HCT116 (cell line): ENCODE measurements at regions of chr4 and their contacts with region 1.

Region 1: DNA sequence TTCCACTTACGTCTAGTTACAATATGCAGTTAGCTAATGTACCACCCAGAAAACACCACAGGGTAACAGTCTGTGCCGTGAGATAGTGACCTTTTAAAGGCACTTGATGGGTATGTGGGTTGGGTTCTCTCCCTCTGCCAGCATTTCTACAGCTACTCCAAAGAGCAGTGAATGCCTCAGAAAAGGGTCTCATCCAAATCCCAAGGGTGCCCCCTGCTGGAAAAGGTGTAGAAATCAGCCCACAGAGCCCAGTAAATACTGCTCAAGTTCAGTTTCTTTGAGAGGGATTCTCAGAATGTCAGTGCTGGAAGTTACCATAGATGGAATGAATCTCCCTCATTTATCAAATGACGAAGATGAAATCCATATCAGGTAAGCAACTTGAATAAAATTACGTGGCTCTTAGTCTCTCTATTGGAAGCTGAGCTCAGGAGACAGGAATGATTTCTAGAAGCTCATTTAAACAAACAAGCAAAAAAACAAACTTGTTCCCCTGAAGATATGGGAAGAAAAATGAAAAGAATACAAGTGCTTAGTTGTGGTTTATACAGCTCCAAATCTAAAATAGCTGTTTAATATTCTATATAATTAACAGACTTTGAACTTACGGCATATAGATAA is 9.5 kb downstream of the RNF175 start:
- DNase-seq: peak; percentile 54
- ATAC-seq: peak; percentile 97
- H3K4me3 ChIP-seq: no peak overlapping the region
- H3K27ac ChIP-seq: no peak overlapping the region
- H3K4me1 ChIP-seq: peaks cover 0 to 7% of the 10 kb centered on the region in 2 experiments; a peak in 1 of 4 replicates
- H3K27me3 ChIP-seq: no peaks in the 10 kb centered on the region
- CTCF ChIP-seq: peak; percentile 77 to 84 (median 77)
- POLR2A ChIP-seq: no peak
- RAD21 ChIP-seq: peak; percentile 89

Region 2: GRCh38 chr4:153344131-153345010 is 405.9 kb before region 1 on chr4 and contains the start of gene MND1:
- CTCF ChIA-PET with region 1: no interaction called
- POLR2A ChIA-PET with region 1: no interaction called
- RAD21 ChIA-PET with region 1: no interaction called
- intact Hi-C with region 1: loop called (anchors 10 kb)
- DNase-seq: peak; percentile 68
- ATAC-seq: peak; percentile 89
- H3K4me3 ChIP-seq: peak within 1 kb of the TSS; percentile 67 to 78
- H3K27ac ChIP-seq: peak within 1 kb of the TSS; percentile 79
- H3K4me1 ChIP-seq: peaks cover 18 to 37% of the 10 kb centered on the region in 2 experiments
- H3K27me3 ChIP-seq: no peaks in the 10 kb centered on the region
- CTCF ChIP-seq: peak; percentile 66 to 84 (median 81)
- POLR2A ChIP-seq: peak; percentile 1
- RAD21 ChIP-seq: peak; percentile 86
- total RNA-seq, gene MND1: 29.9 TPM

Region 3: GRCh38 chr4:153634738-153635353 is 115.5 kb before region 1 on chr4:
- CTCF ChIA-PET with region 1: interaction called, 17 read pairs
- POLR2A ChIA-PET with region 1: no interaction called
- RAD21 ChIA-PET with region 1: interaction called in 1 of 2 experiments, 5 read pairs
- intact Hi-C with region 1: loop called (anchors 1 kb)
- DNase-seq: no peak
- ATAC-seq: peak; percentile 78
- H3K4me3 ChIP-seq: no peak overlapping the region
- H3K27ac ChIP-seq: no peak overlapping the region
- H3K4me1 ChIP-seq: no peaks in the 10 kb centered on the region
- H3K27me3 ChIP-seq: no peaks in the 10 kb centered on the region
- CTCF ChIP-seq: peak; percentile 57 to 73 (median 72); a peak in 5 of 6 replicates
- POLR2A ChIP-seq: no peak
- RAD21 ChIP-seq: peak; percentile 59

Region 4: DNA sequence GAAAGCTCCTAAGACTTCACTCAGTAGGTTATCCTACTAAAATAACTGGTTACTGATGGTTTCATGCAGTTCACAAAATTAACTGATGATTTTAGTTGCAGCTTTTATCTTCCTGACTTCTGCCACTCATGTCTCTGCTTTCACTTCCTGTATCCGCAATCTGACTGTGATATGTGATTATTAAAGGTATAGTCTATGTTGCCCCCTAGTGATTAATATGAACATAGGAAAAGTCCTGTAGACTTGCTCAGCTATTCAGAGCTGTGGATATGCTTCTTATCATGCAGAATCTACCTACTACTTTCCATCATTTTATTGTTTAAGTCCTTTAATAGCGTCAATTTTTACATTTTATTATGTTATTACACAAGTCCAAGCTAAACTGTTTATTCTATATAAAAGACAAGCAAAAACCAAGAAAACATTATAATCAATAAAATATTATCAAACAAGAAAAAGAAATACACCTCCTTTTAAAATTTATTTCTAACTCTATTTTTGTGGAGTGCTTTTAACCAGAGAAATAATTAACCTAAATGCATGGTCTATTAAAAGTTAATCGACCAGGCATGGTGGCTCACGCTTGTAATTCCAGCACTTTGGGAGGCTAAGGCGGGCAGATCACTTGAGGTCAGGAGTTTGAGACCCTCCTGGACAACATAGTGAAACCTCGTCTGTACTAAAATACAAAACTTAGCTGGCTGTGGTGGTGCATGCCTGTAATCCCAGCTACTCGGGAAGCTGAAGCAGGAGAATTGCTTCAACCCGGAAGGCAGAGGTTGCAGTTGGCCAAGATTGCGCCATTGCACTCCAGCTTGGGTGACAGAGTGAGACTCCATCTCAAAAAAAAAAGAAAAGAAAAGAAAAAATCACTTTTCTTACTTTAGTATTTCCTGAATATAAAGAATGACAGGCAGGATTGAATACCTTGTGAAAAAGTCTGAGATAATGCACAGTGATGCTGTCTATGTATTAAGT is 106.6 kb before region 1 on chr4:
- CTCF ChIA-PET with region 1: interaction called, 12 read pairs
- POLR2A ChIA-PET with region 1: no interaction called
- RAD21 ChIA-PET with region 1: no interaction called
- intact Hi-C with region 1: no loop called
- DNase-seq: peak; percentile 46
- ATAC-seq: peak; percentile 90
- H3K4me3 ChIP-seq: no peak overlapping the region
- H3K27ac ChIP-seq: no peak overlapping the region
- H3K4me1 ChIP-seq: 0 out of 4 replicates have a peak, but pooled peaks cover 0 to 5% of the 10 kb centered on the region in 2 experiments
- H3K27me3 ChIP-seq: no peaks in the 10 kb centered on the region
- CTCF ChIP-seq: peak; percentile 32 to 71 (median 63); a peak in 5 of 6 replicates
- POLR2A ChIP-seq: no peak
- RAD21 ChIP-seq: peak; percentile 75

Region 5: DNA sequence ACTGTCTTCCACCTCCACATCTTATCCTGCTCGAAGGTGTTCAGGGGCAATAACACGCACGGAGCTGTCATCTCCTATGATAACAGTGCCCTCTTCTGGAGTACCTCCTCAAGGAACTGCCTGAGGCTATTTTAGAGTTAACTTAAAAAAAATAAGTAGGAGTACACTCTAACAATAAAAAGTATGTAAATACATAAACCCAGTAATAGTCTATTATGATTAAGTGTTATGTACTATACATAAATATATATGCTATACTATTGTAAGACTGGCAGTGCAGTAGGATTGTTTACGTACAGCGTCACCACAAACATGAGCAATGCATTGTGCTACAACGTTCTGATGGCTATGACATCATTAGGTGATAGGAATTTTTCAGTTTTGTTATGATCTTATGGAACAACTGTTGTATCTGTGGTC is 100.7 kb before region 1 on chr4:
- CTCF ChIA-PET with region 1: interaction called, 12 read pairs
- POLR2A ChIA-PET with region 1: no interaction called
- RAD21 ChIA-PET with region 1: no interaction called
- intact Hi-C with region 1: no loop called
- DNase-seq: peak; percentile 60
- ATAC-seq: peak; percentile 89
- H3K4me3 ChIP-seq: no peak overlapping the region
- H3K27ac ChIP-seq: no peak overlapping the region
- H3K4me1 ChIP-seq: no peaks in the 10 kb centered on the region
- H3K27me3 ChIP-seq: no peaks in the 10 kb centered on the region
- CTCF ChIP-seq: peak; percentile 40 to 61 (median 58); a peak in 5 of 6 replicates
- POLR2A ChIP-seq: no peak
- RAD21 ChIP-seq: peak; percentile 78

Region 6: GRCh38 chr4:153731239-153731638 is 19.1 kb before region 1 on chr4:
- CTCF ChIA-PET with region 1: interaction called, 12 read pairs
- POLR2A ChIA-PET with region 1: no interaction called
- RAD21 ChIA-PET with region 1: no interaction called
- intact Hi-C with region 1: no loop called
- DNase-seq: no peak
- ATAC-seq: peak; percentile 49; the same call in 1 of the 2 replicates
- H3K4me3 ChIP-seq: no peak overlapping the region
- H3K27ac ChIP-seq: no peak overlapping the region
- H3K4me1 ChIP-seq: peaks cover 4 to 7% of the 10 kb centered on the region in 2 experiments; a peak in 2 of 4 replicates
- H3K27me3 ChIP-seq: no peaks in the 10 kb centered on the region
- CTCF ChIP-seq: no peak
- POLR2A ChIP-seq: no peak
- RAD21 ChIP-seq: no peak

Region 7: DNA sequence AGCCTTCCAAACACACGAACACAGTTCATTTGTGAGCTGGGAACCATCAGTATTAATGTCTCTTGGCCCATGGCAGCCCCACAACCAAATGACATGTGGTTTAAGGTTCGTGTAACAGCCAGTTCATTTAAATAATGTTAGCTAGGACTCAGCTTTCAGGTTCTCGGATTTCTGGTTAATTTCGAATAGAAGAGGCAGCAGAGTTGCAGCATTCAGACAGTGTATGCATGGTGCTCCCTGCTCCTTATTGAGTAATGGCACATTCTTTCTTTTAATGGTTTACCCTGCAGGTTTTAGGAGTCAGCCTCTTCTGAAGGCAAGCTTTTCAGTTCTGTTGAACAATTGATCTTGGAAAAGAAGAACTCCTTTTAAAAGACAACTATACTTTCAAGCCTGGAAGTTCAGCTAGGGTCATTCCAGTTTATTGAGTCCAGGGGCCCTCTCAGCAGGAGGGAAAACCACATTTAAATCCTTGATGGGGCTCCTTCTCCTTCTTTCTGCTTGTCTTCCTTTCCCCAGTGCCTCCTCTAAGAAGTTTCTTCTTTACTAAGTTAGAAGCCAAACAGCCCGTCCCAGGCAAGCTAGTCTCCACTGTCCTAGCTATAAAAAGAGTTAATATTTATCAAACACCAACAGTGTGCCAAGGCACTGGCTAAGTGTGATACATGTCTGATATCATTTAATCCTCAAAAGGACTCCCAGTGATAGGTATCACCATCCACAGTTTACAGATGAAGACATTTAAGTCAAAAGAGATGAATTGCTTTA is 14.5 kb after region 1 on chr4:
- CTCF ChIA-PET with region 1: interaction called, 11 read pairs
- POLR2A ChIA-PET with region 1: no interaction called
- RAD21 ChIA-PET with region 1: no interaction called
- intact Hi-C with region 1: no loop called
- DNase-seq: no peak
- ATAC-seq: no peak
- H3K4me3 ChIP-seq: no peak overlapping the region
- H3K27ac ChIP-seq: no peak overlapping the region
- H3K4me1 ChIP-seq: no peaks in the 10 kb centered on the region
- H3K27me3 ChIP-seq: no peaks in the 10 kb centered on the region
- CTCF ChIP-seq: no peak
- POLR2A ChIP-seq: no peak
- RAD21 ChIP-seq: no peak